Left cardiac atrium (tissue), 4 donors: ENCODE measurements at regions of chr12 and their contacts with region 1.

Region 1: GRCh38 chr12:6873094-6874014 is at the start of gene SPSB2:
- DNase-seq: peak; percentile 99
- ATAC-seq: peak; percentile 94 to 96
- total RNA-seq, gene SPSB2: 3.7 to 4.1 TPM

Region 2: GRCh38 chr12:6890789-6891645 is 17.7 kb after region 1 on chr12:
- intact Hi-C with region 1: loop called in 1 of 2 experiments (anchors 2 kb)
- DNase-seq: peak; percentile 99
- ATAC-seq: peak; percentile 98 to 99